Activated CD8-positive, alpha-beta memory T cell treated with anti-CD3 and anti-CD28 coated beads, Interleukin-2, amount 10 ng/mL, durations not matched to agents 7 days and 5 days (primary cell): ENCODE measurements at regions of chr1 and their contacts with region 1.

Region 1: DNA sequence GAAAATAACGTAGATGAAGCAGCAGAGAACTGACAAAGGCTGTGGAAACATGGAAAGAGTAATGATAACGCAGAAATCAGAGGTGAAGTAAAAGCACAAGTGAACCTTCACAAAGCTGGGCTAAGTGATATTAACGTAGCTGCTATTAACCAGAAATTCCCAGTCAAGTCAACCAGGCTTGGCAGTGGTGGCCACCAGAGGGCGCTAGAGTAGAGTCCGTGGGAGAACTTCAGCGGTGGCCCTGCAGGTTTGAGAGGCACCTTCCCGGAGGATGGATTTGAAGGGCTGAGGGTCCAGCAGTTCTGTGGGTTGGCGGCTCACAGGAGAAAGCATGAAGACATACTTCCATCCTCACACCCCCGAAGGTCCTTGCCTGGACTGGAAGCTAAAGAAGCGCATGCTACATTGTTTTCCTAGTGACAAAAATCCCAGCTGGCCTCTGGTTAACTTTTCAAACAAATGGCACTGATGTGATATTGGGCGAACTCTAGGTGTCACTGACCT is 81.7 kb upstream of the ZNF648 start:
- DNase-seq: peak; percentile 88
- ATAC-seq: peak; percentile 76
- H3K4me3 Mint-ChIP-seq: no peak overlapping the region
- H3K27ac Mint-ChIP-seq: no peak overlapping the region
- H3K4me1 Mint-ChIP-seq: peaks cover 21% of the 10 kb centered on the region
- H3K27me3 Mint-ChIP-seq: peaks cover 10% of the 10 kb centered on the region

Region 2: DNA sequence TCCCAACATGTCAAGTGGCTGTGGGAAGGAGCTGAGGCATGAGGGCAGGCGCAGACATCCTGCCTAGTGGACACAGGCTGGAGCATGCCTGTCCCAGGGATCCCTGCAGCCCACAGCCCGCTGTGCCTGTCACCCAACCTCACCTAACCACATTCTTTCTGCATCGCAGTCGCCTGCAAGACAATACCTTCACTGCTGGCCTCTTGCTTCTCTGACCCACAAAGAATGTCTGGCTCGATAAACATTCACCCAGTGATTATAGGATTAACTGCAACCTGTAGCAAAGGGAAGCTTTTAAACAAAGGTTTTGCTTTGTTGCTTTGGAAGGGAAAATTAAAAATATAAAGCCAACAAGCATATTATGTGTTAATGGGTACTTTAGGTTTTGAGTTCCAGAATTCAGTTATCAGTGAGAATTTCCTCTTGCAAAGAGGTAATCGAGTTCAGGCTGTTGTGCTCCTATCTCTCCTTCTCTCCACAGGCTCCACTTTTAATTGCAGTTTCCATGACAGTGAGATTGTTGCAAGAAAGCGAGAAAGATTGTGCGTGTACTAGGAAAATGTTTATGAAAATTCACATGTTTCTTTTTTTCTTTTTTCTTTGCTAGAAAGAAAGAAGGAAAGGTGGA is 41.7 kb before region 1 on chr1:
- CTCF ChIA-PET with region 1: no interaction called
- DNase-seq: no peak
- ATAC-seq: no peak
- H3K4me3 Mint-ChIP-seq: no peak overlapping the region
- H3K27ac Mint-ChIP-seq: no peak overlapping the region
- H3K4me1 Mint-ChIP-seq: no peaks in the 10 kb centered on the region
- H3K27me3 Mint-ChIP-seq: peaks cover 62% of the 10 kb centered on the region

Region 3: DNA sequence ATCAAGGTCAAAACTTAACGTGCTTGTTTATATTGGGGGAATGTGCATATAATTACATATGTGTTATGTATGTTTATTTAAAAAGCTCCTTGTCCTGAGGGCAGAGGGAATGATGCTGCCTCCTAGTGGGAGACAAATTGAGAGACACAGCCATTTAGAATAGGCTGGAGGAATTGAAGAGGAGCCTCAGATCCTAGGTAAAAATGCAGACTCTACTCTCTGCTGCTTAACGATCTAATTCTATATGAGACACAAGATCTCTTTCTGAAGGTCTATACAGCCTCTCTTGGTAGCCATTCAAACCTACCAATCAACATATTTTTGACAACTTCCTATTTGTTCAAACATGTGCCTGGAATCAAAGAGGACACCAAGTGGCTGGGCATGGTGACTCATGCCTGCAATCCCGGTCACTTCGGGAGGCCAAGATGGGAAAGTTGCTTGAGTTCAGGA is 54.9 kb after region 1 on chr1:
- CTCF ChIA-PET with region 1: interaction called, 10 read pairs
- DNase-seq: no peak
- ATAC-seq: no peak
- H3K4me3 Mint-ChIP-seq: no peak overlapping the region
- H3K27ac Mint-ChIP-seq: no peak overlapping the region
- H3K4me1 Mint-ChIP-seq: no peaks in the 10 kb centered on the region
- H3K27me3 Mint-ChIP-seq: peaks cover 15% of the 10 kb centered on the region

Region 4: DNA sequence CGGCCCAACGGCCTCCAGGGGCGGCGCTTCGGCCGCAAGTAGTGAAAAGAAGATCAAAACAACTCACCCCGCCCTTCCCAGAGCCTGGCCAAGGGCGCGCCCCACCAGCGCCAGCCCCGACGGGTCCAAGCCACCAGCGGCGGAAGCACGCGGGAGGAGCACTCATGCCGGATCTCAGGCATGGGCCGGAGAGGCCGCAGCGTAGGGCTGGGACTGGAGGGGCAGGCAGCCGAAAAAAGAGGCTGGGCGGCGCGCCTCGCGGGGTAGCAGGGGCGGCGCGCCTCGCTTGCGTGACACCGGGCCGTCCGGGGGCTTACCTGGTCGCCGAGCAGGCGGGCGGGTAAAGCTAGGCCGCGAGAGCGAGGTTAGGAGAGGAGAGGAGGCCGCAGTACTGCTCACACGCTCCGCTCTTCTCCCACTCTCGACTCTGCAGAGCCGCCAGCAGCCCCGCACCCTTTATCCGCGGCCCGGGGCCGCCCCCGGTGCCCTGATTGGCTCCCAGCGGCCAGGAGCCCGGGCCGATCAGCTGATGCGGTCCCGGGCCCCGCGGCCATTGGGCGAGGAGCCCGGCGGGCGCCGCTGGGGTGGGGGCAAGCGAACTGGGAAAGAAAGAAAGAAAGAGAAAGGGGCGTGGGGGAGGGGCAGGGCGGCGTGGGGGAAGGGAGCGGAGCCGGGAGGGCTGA is 248.3 kb after region 1 on chr1 and contains the start of gene GLUL:
- CTCF ChIA-PET with region 1: interaction called, 179 read pairs
- DNase-seq: peak; percentile 78
- ATAC-seq: peak; percentile 78
- H3K4me3 Mint-ChIP-seq: peak within 1 kb of the TSS; percentile 80
- H3K27ac Mint-ChIP-seq: peak within 1 kb of the TSS; percentile 82
- H3K4me1 Mint-ChIP-seq: peaks cover 26% of the 10 kb centered on the region
- H3K27me3 Mint-ChIP-seq: peaks cover 64% of the 10 kb centered on the region
- total RNA-seq, gene GLUL: 18.3 to 77.4 TPM